BJ (cell line): ENCODE measurements at regions of chr19 and their contacts with region 1.

Region 1: GRCh38 chr19:33156334-33156733 is 24.4 kb downstream of the WDR88 start:
- DNase-seq: no peak
- H3K4me3 ChIP-seq: no peak overlapping the region
- H3K27me3 ChIP-seq: no peaks in the 10 kb centered on the region; the same call in 1 of the 2 replicates
- CTCF ChIP-seq: no peak

Region 2: DNA sequence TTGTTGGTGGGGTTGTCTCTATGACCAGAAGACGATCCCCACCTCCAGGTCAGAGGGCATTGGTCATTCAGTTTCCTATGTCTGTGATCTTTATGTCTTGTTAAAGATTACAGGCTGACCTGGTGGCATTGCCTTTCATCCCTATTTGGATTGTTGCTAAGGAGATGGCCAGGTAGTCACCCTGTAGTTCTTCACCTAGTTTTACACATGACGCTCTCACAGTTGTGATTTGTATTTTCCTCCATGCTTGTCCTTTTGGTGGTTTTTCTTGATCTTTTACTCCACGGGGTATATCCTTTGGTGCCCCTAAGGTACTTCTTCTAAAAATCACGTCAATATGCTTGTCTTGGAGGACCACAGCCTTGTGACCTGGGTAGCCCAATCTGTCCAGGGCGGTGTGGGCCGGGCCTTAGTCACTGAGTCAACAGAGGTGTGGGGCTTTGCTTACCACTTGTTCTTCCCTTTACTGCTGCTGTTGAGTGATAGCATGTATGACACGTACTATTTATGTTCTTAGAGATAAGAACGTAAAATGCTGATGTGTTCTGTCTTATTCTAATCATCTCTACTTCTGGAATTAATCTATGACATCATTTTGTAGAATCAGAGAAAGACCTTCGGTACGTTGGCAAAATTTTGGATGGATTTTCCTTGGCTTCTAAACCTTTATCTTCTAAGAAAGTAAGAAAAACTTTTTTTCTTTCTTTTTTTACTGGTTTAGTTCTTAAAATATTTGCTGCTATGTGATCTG is 55.3 kb before region 1 on chr19:
- CTCF ChIA-PET with region 1: no interaction called
- POLR2A ChIA-PET with region 1: no interaction called
- DNase-seq: no peak
- H3K4me3 ChIP-seq: no peak overlapping the region
- H3K27me3 ChIP-seq: no peaks in the 10 kb centered on the region
- CTCF ChIP-seq: no peak

Region 3: GRCh38 chr19:33134571-33135041 is 21.7 kb before region 1 on chr19:
- CTCF ChIA-PET with region 1: no interaction called
- POLR2A ChIA-PET with region 1: interaction called, 13 read pairs
- DNase-seq: no peak
- H3K4me3 ChIP-seq: no peak overlapping the region
- H3K27me3 ChIP-seq: no peaks in the 10 kb centered on the region; the same call in 1 of the 2 replicates
- CTCF ChIP-seq: no peak

Region 4: GRCh38 chr19:33143897-33144405 is 12.4 kb before region 1 on chr19:
- CTCF ChIA-PET with region 1: interaction called, 22 read pairs
- POLR2A ChIA-PET with region 1: no interaction called
- DNase-seq: no peak
- H3K4me3 ChIP-seq: no peak overlapping the region
- H3K27me3 ChIP-seq: no peaks in the 10 kb centered on the region
- CTCF ChIP-seq: peak; percentile 95